PC-3 (cell line): ENCODE measurements at regions of chr11 and their contacts with region 1.

Region 1: GRCh38 chr11:102940714-102941588 is 14.6 kb downstream of the MMP13 start:
- DNase-seq: peak; percentile 96
- ATAC-seq: peak; percentile 93
- H3K4me3 ChIP-seq: no peak overlapping the region
- H3K27ac ChIP-seq: no peak overlapping the region
- H3K4me1 ChIP-seq: peaks cover 14% of the 10 kb centered on the region; the same call in 1 of the 2 replicates
- H3K27me3 ChIP-seq: no peaks in the 10 kb centered on the region
- CTCF ChIP-seq: peak; percentile 95

Region 2: GRCh38 chr11:102810945-102811660 is 129.8 kb before region 1 on chr11:
- CTCF ChIA-PET with region 1: interaction called, 5 read pairs
- POLR2A ChIA-PET with region 1: no interaction called
- intact Hi-C with region 1: loop called (anchors 1 kb)
- DNase-seq: peak; percentile 69
- ATAC-seq: peak; percentile 86
- H3K4me3 ChIP-seq: no peak overlapping the region
- H3K27ac ChIP-seq: no peak overlapping the region
- H3K4me1 ChIP-seq: 0 out of 2 replicates have a peak, but pooled peaks cover 5% of the 10 kb centered on the region
- H3K27me3 ChIP-seq: no peaks in the 10 kb centered on the region
- CTCF ChIP-seq: peak; percentile 88

Region 3: GRCh38 chr11:102900346-102900745 is 40.6 kb before region 1 on chr11:
- CTCF ChIA-PET with region 1: no interaction called
- POLR2A ChIA-PET with region 1: no interaction called
- intact Hi-C with region 1: no loop called
- DNase-seq: no peak
- ATAC-seq: no peak
- H3K4me3 ChIP-seq: no peak overlapping the region
- H3K27ac ChIP-seq: no peak overlapping the region
- H3K4me1 ChIP-seq: no peaks in the 10 kb centered on the region
- H3K27me3 ChIP-seq: no peaks in the 10 kb centered on the region
- CTCF ChIP-seq: no peak

Region 4: DNA sequence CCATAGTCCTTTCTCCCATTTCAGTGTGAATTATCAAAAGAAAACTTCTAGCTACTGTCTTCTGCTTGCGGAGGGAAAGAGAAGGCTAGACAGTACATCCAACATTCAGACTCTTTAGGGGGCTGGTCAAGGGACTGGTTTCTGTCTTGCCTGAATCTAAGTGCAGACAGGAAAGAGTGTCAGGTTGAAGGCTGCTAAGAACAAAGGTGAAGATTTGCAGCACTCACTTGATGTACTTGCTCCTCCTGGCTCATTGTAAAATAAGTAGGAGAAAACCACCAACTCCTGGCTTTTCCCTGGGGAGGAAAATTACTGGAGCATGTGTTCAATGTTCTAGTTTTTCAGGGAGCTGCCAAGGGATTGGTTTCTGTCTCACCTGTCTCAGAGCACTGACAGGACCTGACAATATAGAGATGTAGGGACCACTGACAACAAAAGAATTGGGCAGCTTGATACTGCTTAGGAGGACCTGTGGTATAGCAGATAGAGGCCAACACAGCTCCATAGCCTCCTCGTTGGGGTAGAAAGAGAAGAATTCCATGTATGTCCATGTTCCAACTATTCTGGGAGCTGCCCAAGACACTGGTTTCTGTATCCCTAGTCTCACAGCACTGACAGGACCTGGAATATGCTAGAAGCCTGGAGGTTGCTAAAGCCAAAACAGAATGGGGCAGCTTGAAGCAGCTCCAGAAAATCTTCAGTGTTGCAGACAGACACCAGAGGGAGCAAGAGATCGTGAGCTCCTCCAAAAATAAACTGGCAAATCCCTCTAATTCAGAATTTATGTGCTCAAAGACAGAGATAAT is 26.5 kb before region 1 on chr11:
- CTCF ChIA-PET with region 1: interaction called, 13 read pairs
- POLR2A ChIA-PET with region 1: no interaction called
- intact Hi-C with region 1: loop called (anchors 1 kb)
- DNase-seq: peak; percentile 76
- ATAC-seq: peak; percentile 86
- H3K4me3 ChIP-seq: no peak overlapping the region
- H3K27ac ChIP-seq: no peak overlapping the region
- H3K4me1 ChIP-seq: peaks cover 15% of the 10 kb centered on the region
- H3K27me3 ChIP-seq: no peaks in the 10 kb centered on the region
- CTCF ChIP-seq: peak; percentile 93

Region 5: GRCh38 chr11:103035791-103036434 is 95.0 kb after region 1 on chr11:
- CTCF ChIA-PET with region 1: no interaction called
- POLR2A ChIA-PET with region 1: no interaction called
- intact Hi-C with region 1: loop called (anchors 1 kb)
- DNase-seq: peak; percentile 96
- ATAC-seq: peak; percentile 90
- H3K4me3 ChIP-seq: no peak overlapping the region
- H3K27ac ChIP-seq: peak overlapping the region; percentile 31
- H3K4me1 ChIP-seq: peaks cover 8% of the 10 kb centered on the region
- H3K27me3 ChIP-seq: no peaks in the 10 kb centered on the region
- CTCF ChIP-seq: peak; percentile 89